BJ (cell line): ENCODE measurements at regions of chr15 and their contacts with region 1.

Region 1: DNA sequence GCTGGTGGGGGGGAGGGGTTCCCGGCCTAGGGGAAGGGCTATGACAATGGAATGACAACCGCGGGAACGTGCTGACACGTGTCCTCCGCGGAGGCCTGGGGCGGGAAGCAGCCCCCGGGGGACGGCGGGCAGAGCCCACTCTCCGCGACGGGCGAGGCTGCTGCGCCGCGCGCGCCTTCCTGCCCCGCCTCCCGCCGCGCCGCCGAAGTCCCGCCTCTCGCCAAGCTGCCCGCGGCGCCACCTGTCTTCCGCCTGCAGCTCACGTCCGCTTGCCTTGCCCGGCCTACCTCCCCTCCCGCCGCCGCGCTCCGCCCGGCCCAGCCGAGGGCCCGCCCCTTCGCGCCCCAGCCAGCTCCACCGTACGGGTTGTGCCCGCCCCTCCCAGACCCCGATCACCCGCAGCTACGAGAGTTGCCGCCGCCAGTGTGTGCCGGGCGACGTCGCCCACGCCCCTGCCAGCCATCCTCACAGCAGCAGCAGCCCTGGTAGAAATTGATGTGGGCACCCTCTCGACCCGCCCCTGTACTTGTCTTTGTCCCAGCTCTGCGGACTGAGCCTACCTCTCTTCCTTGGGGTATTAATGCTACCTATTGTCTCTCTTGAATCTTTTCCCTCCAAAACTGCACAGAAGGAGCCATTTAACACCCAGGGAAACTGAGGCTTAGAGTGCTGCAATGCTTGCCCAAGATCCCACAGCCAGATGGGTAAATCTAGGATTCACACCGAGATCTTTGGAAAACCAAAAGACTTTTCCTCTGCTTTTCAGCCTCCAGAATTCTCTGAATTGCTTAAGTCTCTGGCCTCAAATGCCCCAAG is at the start of gene PARP16:
- DNase-seq: no peak
- H3K4me3 ChIP-seq: peak within 1 kb of the TSS; percentile 56
- H3K27me3 ChIP-seq: no peaks in the 10 kb centered on the region; the same call in 1 of the 2 replicates
- CTCF ChIP-seq: peak; percentile 21; the same call in 1 of the 2 replicates
- polyA plus RNA-seq, gene PARP16: 5.1 and 5.2 TPM in 2 replicates

Region 2: DNA sequence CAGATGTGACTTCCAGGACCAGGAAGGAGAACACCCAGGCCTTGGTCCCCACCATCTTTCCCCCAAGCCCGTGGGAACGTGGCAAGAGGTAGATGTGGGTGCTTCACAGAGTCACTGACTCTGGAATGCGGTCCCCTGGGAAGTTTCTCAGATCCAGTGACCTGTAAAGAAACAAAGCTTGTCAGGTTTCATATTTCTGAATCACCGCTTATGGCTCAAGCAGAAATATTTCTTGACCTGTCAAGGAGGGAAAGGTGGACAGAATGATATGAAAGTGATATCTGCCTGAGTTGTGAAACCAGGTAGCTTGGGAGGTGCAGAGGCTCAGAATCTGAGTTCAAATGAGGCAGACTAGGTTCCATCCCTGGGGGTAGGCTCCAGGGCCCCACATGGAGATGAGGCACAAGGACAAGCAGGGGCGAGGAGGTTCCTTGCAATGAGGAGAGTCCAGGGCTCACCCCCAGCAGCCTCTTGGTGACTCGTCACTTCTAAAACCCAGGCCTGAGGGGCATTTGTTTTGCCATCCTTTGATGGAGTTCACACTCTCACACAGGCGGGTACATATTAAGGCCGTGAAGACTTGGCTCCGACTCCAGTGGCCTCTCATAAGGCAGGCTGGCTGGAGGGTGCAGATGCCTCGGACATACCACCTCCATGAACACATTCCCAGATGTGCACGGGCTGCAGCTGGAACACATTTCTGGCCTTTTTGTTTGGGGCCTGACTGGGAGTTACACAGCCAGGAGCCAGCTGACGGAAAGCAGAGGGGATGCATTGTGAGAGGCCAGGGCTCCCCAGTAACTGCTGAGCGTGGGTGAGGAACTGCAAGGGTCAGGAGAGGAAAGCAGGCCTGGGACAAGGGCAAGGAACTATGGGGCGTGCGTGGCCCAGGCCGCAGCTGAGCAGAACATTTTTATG is 77.0 kb before region 1 on chr15:
- CTCF ChIA-PET with region 1: interaction called, 3 read pairs
- POLR2A ChIA-PET with region 1: interaction called, 11 read pairs
- DNase-seq: no peak
- H3K4me3 ChIP-seq: no peak overlapping the region
- H3K27me3 ChIP-seq: peaks cover 3% of the 10 kb centered on the region
- CTCF ChIP-seq: no peak

Region 3: DNA sequence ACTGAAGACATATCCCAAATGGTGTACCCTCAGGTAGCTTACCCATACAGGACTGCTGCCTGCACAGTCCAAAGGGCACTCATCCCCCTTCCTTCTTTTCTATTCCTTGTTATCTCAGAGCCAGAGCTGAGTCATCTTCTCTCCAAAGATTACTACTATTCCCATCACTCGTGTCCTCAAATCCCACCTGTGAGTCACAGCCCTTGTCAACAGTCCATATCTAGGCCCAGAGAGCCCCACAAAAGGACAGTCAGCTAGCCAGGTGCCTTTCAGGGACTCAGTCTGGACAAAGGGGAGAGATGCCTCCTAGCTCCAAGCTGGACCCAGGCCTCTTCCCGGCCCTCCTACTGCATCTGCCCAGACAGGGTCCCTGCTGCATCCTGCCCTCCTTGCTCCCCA is 11.2 kb before region 1 on chr15:
- CTCF ChIA-PET with region 1: interaction called, 46 read pairs
- POLR2A ChIA-PET with region 1: no interaction called
- DNase-seq: no peak
- H3K4me3 ChIP-seq: no peak overlapping the region
- H3K27me3 ChIP-seq: no peaks in the 10 kb centered on the region
- CTCF ChIP-seq: no peak

Region 4: GRCh38 chr15:65304389-65305144 is 17.7 kb after region 1 on chr15 and contains the start of gene RNU5B-1:
- CTCF ChIA-PET with region 1: interaction called, 4 read pairs
- POLR2A ChIA-PET with region 1: interaction called, 12 read pairs
- DNase-seq: peak; percentile 91
- H3K4me3 ChIP-seq: peak within 1 kb of the TSS; percentile 48
- H3K27me3 ChIP-seq: no peaks in the 10 kb centered on the region
- CTCF ChIP-seq: peak; percentile 92
- polyA plus RNA-seq, gene RNU5B-1: not detected in 2 replicates